Activated B cell treated with CpG ODN at 0.5 μM for 24 hours (primary cell): ENCODE measurements at regions of chr12 and their contacts with region 1.

Region 1: DNA sequence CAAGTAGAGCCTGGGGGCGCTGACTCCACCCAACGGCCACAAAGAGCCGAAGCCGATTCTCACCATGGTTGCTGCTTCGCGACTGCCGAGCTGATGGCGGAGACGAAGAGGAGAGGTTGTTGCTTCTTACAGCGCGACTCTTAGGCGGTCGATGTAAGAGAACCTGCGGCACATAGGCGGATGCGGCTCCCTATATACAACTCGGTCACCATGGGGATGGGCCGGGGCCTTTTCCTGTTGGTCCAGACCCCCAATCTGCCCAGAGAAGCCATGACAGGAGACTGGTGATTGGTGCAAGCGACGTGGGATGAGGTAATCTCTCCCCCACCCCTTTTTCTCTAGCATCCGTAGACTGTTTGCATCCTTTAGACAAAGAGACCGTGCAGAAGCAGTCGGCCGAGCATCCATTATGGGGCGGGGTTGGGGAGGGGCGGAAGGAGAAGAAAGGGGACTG is at the start of gene TUBA1A:
- DNase-seq: peak; percentile 83
- ATAC-seq: peak; percentile 86
- H3K4me3 Mint-ChIP-seq: peak within 1 kb of the TSS; percentile 97
- H3K27ac Mint-ChIP-seq: peak within 1 kb of the TSS; percentile 99
- H3K4me1 Mint-ChIP-seq: peaks cover 20% of the 10 kb centered on the region
- H3K27me3 Mint-ChIP-seq: no peaks in the 10 kb centered on the region
- CTCF ChIP-seq: no peak
- total RNA-seq, gene TUBA1A: 114 and 115 TPM in 2 replicates

Region 2: DNA sequence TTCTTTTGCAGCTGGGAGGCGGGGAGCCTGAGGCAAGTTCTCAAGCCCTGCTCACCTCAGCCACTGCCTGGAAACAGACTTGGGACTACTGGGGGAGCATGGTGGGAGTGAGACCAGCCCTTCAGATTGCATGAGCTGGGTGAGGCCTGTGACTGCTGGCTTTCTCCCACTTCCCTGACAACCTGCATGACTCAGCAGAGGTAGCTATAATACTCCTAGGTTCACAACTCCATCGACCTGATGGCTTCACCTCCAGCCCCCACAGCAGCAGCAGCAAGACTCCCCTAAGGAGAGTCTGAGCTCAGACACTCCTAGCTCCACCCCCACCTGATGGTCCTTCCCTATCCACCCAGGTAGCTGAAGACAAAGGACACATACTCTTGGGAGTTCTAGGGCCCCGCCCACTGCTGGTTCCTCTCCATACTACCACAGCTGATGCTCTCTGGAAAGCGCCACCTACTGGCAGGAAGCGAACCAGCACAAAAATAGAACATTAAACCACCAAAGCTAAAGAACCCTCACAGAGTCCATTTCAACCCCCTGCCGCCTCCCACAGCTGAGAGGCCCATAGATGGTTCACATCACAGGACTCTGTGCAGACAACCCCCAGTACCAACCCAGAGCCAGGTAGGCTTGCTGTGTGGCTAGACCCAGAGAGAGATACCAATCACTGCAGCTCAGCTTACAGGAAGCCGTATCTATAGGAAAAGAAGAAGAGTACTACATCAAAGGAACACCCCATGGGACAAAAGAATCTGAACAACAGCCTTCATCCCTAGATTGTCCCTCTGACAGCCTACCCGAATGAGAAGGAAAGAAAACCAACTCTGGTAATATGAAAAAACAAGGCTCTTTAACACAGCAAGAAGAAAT is 1551.8 kb before region 1 on chr12:
- CTCF ChIA-PET with region 1: no interaction called
- POLR2A ChIA-PET with region 1: no interaction called
- intact Hi-C with region 1: no loop called
- DNase-seq: no peak
- ATAC-seq: no peak
- H3K4me3 Mint-ChIP-seq: no peak overlapping the region
- H3K27ac Mint-ChIP-seq: no peak overlapping the region
- H3K4me1 Mint-ChIP-seq: no peaks in the 10 kb centered on the region
- H3K27me3 Mint-ChIP-seq: no peaks in the 10 kb centered on the region
- CTCF ChIP-seq: no peak

Region 3: DNA sequence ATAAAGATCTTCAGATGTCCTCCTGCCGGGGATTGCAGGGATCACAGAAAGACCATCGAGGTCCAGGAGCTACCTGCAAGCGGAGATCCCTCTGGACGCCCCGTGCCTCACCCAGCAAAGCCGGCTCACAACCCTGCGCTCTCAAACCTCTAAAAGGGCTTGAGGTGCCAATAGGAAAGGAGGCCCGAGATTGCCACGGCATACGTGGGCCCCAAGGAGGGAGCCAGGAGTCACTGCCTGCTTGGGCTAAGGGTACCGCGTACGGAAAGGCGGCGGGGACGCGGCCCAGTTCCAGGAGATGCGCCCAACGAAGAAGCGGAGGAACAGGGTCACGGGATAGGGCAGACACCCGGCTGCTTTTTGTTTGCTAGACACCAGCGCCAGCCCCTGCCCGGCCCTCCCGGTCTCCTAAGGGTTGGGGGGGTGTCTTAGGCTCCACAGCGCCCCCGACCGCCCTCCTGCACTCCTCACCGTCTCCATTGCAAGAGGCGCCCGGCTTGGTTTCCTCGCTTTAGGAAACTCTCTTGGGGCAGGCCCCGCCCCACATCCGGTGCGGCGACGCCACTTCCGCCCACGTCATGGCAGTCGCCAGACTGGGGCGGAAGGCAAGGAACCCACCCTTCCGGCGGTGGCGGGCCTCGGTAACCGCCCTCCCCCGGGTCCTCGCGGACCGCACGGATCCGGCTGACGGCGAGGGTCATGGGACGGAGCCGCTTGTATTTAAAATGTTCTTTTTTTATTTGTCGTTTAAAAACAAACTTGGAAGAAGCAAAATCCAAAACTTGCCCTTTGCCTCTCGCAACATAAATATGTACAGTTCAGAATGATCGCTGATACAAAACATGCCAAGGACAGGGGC is 170.5 kb before region 1 on chr12 and contains the start of gene PRKAG1:
- CTCF ChIA-PET with region 1: no interaction called
- POLR2A ChIA-PET with region 1: no interaction called
- intact Hi-C with region 1: loop called (anchors 1 kb)
- DNase-seq: peak; percentile 97
- ATAC-seq: peak; percentile 86
- H3K4me3 Mint-ChIP-seq: peak within 1 kb of the TSS; percentile 93
- H3K27ac Mint-ChIP-seq: peak within 1 kb of the TSS; percentile 98
- H3K4me1 Mint-ChIP-seq: peaks cover 31% of the 10 kb centered on the region
- H3K27me3 Mint-ChIP-seq: no peaks in the 10 kb centered on the region
- CTCF ChIP-seq: no peak
- total RNA-seq, gene PRKAG1: 55.3 and 70.5 TPM in 2 replicates

Region 4: GRCh38 chr12:49069507-49070346 is 119.2 kb before region 1 on chr12 and contains the start of gene RHEBL1:
- CTCF ChIA-PET with region 1: no interaction called
- POLR2A ChIA-PET with region 1: interaction called, 11 read pairs
- intact Hi-C with region 1: no loop called
- DNase-seq: peak; percentile 98
- ATAC-seq: peak; percentile 100
- H3K4me3 Mint-ChIP-seq: peak within 1 kb of the TSS; percentile 99
- H3K27ac Mint-ChIP-seq: peak within 1 kb of the TSS; percentile 93
- H3K4me1 Mint-ChIP-seq: peaks cover 15% of the 10 kb centered on the region
- H3K27me3 Mint-ChIP-seq: no peaks in the 10 kb centered on the region
- CTCF ChIP-seq: no peak
- total RNA-seq, gene RHEBL1: 3.2 and 3.3 TPM in 2 replicates

Region 5: GRCh38 chr12:49110464-49111155 is 78.3 kb before region 1 on chr12 and contains the start of gene LMBR1L:
- CTCF ChIA-PET with region 1: interaction called, 3 read pairs
- POLR2A ChIA-PET with region 1: interaction called, 18 read pairs
- intact Hi-C with region 1: loop called (anchors 1 kb)
- DNase-seq: peak; percentile 83
- ATAC-seq: peak; percentile 94
- H3K4me3 Mint-ChIP-seq: peak within 1 kb of the TSS; percentile 98
- H3K27ac Mint-ChIP-seq: peak within 1 kb of the TSS; percentile 96
- H3K4me1 Mint-ChIP-seq: peaks cover 46% of the 10 kb centered on the region
- H3K27me3 Mint-ChIP-seq: no peaks in the 10 kb centered on the region
- CTCF ChIP-seq: no peak
- total RNA-seq, gene LMBR1L: 64.2 and 79.9 TPM in 2 replicates

Region 6: GRCh38 chr12:49170924-49171323 is 18.0 kb before region 1 on chr12:
- CTCF ChIA-PET with region 1: no interaction called
- POLR2A ChIA-PET with region 1: interaction called, 20 read pairs
- intact Hi-C with region 1: no loop called
- DNase-seq: no peak
- ATAC-seq: no peak
- H3K4me3 Mint-ChIP-seq: no peak overlapping the region
- H3K27ac Mint-ChIP-seq: no peak overlapping the region
- H3K4me1 Mint-ChIP-seq: no peaks in the 10 kb centered on the region
- H3K27me3 Mint-ChIP-seq: no peaks in the 10 kb centered on the region
- CTCF ChIP-seq: no peak

Region 7: GRCh38 chr12:49232940-49233841 is 44.2 kb after region 1 on chr12:
- CTCF ChIA-PET with region 1: interaction called, 7 read pairs
- POLR2A ChIA-PET with region 1: interaction called, 16 read pairs
- intact Hi-C with region 1: loop called (anchors 1 kb)
- DNase-seq: no peak
- ATAC-seq: no peak
- H3K4me3 Mint-ChIP-seq: peak overlapping the region; percentile 93
- H3K27ac Mint-ChIP-seq: peak overlapping the region; percentile 89
- H3K4me1 Mint-ChIP-seq: peaks cover 15% of the 10 kb centered on the region
- H3K27me3 Mint-ChIP-seq: no peaks in the 10 kb centered on the region
- CTCF ChIP-seq: no peak

Region 8: GRCh38 chr12:49314811-49315210 is 125.9 kb after region 1 on chr12:
- CTCF ChIA-PET with region 1: no interaction called
- POLR2A ChIA-PET with region 1: no interaction called
- intact Hi-C with region 1: no loop called
- DNase-seq: no peak
- ATAC-seq: no peak
- H3K4me3 Mint-ChIP-seq: no peak overlapping the region
- H3K27ac Mint-ChIP-seq: no peak overlapping the region
- H3K4me1 Mint-ChIP-seq: no peaks in the 10 kb centered on the region
- H3K27me3 Mint-ChIP-seq: peaks cover 9% of the 10 kb centered on the region
- CTCF ChIP-seq: no peak